GM12878 (cell line): ENCODE measurements at regions of chr6 and their contacts with region 1.

Region 1: DNA sequence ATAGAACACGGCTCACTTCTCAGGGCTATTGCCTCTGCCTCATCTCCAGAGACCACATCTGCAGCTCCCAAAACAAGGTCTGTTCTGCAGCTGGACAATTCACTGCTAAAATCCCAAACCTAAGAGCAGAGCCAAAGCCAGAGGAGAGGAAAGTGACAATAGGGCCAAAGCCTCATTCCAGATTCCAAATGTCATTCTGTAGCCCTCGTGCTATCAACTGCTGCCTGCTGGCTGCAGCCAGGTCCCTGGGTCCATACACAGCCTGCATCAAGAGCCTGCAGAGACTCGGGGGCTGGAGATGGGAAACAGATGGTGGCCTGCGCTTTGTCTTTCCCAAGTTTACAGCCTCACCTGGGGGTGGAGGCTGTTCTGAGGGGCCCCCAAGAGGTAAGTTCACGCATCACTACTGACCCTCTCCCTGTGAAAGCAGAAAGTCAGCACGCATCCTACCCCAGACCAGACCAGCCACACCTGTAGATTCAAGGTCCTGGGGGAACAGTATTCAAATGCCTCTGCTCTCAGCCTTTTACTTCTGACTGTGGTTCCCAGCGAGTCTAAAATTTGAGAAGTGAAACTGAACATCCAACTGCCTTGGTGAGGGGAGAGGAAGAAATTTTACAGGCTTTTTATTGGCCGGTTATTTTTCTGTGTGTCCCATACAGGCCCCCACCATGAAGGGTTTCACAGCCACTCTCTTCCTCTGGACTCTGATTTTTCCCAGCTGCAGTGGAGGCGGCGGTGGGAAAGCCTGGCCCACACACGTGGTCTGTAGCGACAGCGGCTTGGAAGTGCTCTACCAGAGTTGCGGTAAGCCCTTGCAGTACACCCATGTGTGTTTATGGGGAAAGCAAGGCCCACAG is at the start of gene LY86:
- DNase-seq: peak; percentile 97
- ATAC-seq: peak; percentile 54
- H3K4me3 ChIP-seq: peak within 1 kb of the TSS; percentile 83
- H3K27ac ChIP-seq: peak within 1 kb of the TSS; percentile 100
- H3K4me1 ChIP-seq: peaks cover 40% of the 10 kb centered on the region
- H3K27me3 ChIP-seq: no peaks in the 10 kb centered on the region
- CTCF ChIP-seq: peak in 1 of 3 experiments; percentile 23; a peak in 2 of 6 replicates
- EP300 ChIP-seq: peak; percentile 30 to 80; a peak in 3 of 4 replicates
- POLR2A ChIP-seq: peak; percentile 77
- RAD21 ChIP-seq: peak; percentile 21; the same call in 1 of the 2 replicates
- polyA plus RNA-seq, gene LY86: 306 to 457 TPM

Region 2: GRCh38 chr6:6407071-6407741 is 181.1 kb before region 1 on chr6:
- CTCF ChIA-PET with region 1: interaction called, 3 read pairs
- POLR2A ChIA-PET with region 1: interaction called, 3 read pairs
- RAD21 ChIA-PET with region 1: interaction called, 9 read pairs
- SMC1A ChIA-PET with region 1: interaction called, 10 read pairs
- in situ Hi-C with region 1: no loop called
- intact Hi-C with region 1: loop called (anchors 5 kb)
- DNase-seq: peak; percentile 97
- ATAC-seq: peak; percentile 95
- H3K4me3 ChIP-seq: peak overlapping the region; percentile 23; the same call in 1 of the 2 replicates
- H3K27ac ChIP-seq: peak overlapping the region; percentile 54
- H3K4me1 ChIP-seq: peaks cover 22% of the 10 kb centered on the region
- H3K27me3 ChIP-seq: no peaks in the 10 kb centered on the region
- CTCF ChIP-seq: no peak
- EP300 ChIP-seq: peak; percentile 76 to 83; a peak in 3 of 4 replicates
- POLR2A ChIP-seq: peak; percentile 47; the same call in 1 of the 2 replicates
- RAD21 ChIP-seq: 0 out of 2 replicates have a peak, but pooled peaks have one; percentile 8

Region 3: DNA sequence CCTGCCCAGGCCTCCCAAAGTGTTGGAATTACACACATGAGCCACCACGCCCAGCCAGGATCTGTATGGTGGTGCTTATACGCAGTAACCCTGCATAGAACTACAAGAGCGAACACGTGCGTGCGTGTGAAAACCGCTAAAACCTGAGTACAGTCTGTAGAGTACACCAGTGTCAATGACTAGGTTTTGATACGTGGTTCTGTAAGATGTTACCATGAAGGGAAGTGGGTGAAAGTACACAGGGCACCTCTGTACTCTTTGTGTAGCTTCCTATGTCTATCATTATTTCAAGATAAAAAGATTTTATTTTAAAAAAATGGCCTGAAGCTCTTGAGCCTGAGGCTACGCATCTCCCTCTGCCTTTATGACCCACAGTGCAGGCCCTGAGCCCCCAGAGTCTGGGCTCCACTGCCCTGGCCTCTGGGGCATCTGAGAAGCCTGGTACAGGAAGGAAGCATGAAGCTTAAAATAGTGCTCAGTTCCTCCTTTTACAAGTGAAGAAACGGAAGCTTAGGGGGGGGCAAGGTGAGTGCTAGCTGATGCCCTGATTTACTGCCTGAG is 21.8 kb after region 1 on chr6:
- CTCF ChIA-PET with region 1: interaction called, 5 read pairs
- POLR2A ChIA-PET with region 1: interaction called, 10 read pairs
- RAD21 ChIA-PET with region 1: interaction called, 15 read pairs
- SMC1A ChIA-PET with region 1: interaction called, 65 read pairs
- in situ Hi-C with region 1: no loop called
- intact Hi-C with region 1: no loop called
- DNase-seq: peak; percentile 71
- ATAC-seq: peak; percentile 97
- H3K4me3 ChIP-seq: peak overlapping the region; percentile 39; the same call in 1 of the 2 replicates
- H3K27ac ChIP-seq: peak overlapping the region; percentile 77
- H3K4me1 ChIP-seq: peaks cover 21% of the 10 kb centered on the region
- H3K27me3 ChIP-seq: no peaks in the 10 kb centered on the region
- CTCF ChIP-seq: no peak
- EP300 ChIP-seq: no peak
- POLR2A ChIP-seq: no peak
- RAD21 ChIP-seq: no peak

Region 4: GRCh38 chr6:6661684-6662083 is 73.4 kb after region 1 on chr6:
- CTCF ChIA-PET with region 1: interaction called, 5 read pairs
- POLR2A ChIA-PET with region 1: interaction called, 7 read pairs
- RAD21 ChIA-PET with region 1: interaction called, 25 read pairs
- SMC1A ChIA-PET with region 1: interaction called, 20 read pairs
- in situ Hi-C with region 1: no loop called
- intact Hi-C with region 1: loop called (anchors 1 kb)
- DNase-seq: no peak
- ATAC-seq: no peak
- H3K4me3 ChIP-seq: no peak overlapping the region
- H3K27ac ChIP-seq: no peak overlapping the region
- H3K4me1 ChIP-seq: peaks cover 24% of the 10 kb centered on the region
- H3K27me3 ChIP-seq: no peaks in the 10 kb centered on the region
- CTCF ChIP-seq: no peak
- EP300 ChIP-seq: no peak
- POLR2A ChIP-seq: no peak
- RAD21 ChIP-seq: no peak

Region 5: GRCh38 chr6:6918216-6918983 is 330.1 kb after region 1 on chr6:
- CTCF ChIA-PET with region 1: no interaction called
- POLR2A ChIA-PET with region 1: no interaction called
- RAD21 ChIA-PET with region 1: no interaction called
- SMC1A ChIA-PET with region 1: no interaction called
- in situ Hi-C with region 1: no loop called
- intact Hi-C with region 1: loop called (anchors 1 kb)
- DNase-seq: peak; percentile 91
- ATAC-seq: peak; percentile 96
- H3K4me3 ChIP-seq: no peak overlapping the region
- H3K27ac ChIP-seq: peak overlapping the region; percentile 30; the same call in 1 of the 2 replicates
- H3K4me1 ChIP-seq: peaks cover 27% of the 10 kb centered on the region
- H3K27me3 ChIP-seq: no peaks in the 10 kb centered on the region
- CTCF ChIP-seq: no peak
- EP300 ChIP-seq: peak; percentile 99
- POLR2A ChIP-seq: no peak
- RAD21 ChIP-seq: peak; percentile 31; the same call in 1 of the 2 replicates